GM10248 (cell line): ENCODE measurements at regions of chr12 and their contacts with region 1.

Region 1: DNA sequence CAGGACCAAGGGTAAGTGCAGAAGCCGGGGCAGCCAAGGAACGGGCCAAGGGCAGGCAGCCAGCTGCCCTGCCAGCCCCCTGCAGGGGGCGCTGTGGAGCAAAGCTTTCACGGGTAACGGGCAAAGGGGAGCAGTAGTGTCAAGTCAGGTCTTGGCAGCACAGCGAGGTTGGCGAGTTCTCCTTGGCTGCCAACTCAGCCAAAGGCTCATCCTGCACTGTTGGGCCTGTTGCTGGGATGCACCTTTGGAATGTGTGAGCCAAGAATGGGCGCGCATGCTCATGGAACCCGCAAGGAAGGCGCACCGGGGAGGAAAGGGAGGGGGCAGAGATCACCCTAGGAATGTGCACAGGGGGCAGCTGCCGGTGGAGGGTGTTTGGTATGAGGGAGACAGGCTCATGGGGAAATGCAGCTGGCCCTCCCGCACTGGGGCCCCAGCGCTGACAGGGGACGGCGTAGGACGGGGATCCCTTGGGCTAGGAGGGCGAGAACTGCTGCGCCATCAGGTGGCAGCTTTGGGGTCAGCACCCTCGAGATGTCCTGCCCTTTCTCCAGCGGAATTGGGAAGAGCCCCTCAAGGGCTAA is 138.0 kb downstream of the ASCL4 start:
- DNase-seq: peak; percentile 82
- CTCF ChIP-seq: peak; percentile 91

Region 2: DNA sequence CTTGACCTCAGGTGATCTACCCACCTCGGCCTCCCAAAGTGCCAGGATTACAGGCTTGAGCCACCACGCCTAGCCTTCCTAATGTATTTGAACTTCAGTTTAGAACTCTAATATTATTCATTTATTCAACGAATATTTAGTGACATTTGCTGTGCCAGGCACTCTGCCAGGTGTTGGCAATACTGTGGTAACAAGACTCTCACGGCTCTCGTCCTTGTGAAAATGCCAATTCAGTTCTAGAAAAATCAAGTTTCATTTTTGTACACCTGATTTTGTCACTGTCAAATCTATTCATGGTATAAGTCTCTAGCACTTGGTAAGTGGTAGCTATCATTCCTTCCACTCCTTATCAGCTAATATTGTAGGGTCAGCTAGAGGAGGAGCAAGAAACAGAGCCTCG is 233.2 kb before region 1 on chr12:
- CTCF ChIA-PET with region 1: interaction called, 39 read pairs
- POLR2A ChIA-PET with region 1: no interaction called
- DNase-seq: no peak
- CTCF ChIP-seq: no peak

Region 3: DNA sequence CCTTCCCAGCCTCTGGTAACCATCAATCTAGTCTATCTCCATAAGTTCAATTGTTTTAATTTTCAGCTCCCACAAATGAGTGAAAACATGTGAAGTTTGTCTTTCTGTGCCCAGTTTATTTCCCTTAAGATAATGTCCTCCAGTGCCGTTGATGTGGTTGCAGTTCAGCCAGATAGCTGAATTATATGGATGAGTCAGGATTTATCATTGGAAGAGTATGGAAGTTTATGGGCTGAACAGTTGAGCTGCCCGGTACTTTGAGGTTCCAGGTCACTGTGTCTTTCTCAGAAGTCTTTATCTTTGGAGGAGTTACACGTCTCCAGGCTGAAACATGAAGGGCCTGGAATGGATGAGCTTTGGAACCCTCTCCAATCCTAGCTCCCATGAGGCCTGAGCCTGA is 17.9 kb before region 1 on chr12:
- CTCF ChIA-PET with region 1: interaction called, 18 read pairs
- POLR2A ChIA-PET with region 1: no interaction called
- DNase-seq: no peak
- CTCF ChIP-seq: no peak

Region 4: DNA sequence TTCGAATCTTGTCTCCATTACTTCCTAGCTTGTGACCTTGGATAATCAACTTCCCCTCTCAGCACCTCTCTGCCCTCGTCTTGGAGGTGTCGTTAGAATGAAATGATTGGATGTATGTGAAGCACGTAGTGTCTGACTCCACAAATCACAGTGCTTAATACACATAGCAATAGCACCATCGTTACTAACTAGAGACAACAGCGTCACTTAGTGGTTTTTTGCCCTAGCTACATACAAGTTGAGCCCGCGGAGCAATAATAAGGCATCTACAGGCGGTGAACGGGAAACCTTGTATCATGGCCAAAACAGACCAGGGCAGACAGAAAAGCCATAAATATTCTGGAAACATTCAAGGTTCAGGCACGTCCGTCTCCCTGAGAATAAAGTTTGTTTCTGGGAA is 16.9 kb after region 1 on chr12:
- CTCF ChIA-PET with region 1: interaction called, 54 read pairs
- POLR2A ChIA-PET with region 1: no interaction called
- DNase-seq: no peak
- CTCF ChIP-seq: peak; percentile 20

Region 5: DNA sequence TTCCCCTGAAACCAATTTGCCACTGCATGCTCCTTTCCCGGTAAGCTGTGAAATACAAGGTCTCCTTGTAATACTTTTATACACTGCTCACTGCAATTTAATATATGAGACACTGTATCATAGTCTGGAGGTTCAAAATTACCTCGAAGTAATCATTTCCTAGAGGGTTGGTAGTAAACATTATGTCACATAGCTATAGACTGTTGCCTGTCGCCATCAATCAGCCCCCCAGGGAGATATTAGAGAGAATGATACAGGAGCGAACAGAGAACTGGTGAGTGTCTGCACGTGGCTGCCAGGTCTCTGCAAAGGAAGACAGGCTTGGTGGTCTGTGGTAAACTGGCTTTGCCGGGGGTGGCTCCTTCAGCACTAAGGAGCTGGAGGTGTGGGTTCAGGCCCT is 51.1 kb after region 1 on chr12:
- CTCF ChIA-PET with region 1: no interaction called
- POLR2A ChIA-PET with region 1: no interaction called
- DNase-seq: no peak
- CTCF ChIP-seq: no peak

Region 6: DNA sequence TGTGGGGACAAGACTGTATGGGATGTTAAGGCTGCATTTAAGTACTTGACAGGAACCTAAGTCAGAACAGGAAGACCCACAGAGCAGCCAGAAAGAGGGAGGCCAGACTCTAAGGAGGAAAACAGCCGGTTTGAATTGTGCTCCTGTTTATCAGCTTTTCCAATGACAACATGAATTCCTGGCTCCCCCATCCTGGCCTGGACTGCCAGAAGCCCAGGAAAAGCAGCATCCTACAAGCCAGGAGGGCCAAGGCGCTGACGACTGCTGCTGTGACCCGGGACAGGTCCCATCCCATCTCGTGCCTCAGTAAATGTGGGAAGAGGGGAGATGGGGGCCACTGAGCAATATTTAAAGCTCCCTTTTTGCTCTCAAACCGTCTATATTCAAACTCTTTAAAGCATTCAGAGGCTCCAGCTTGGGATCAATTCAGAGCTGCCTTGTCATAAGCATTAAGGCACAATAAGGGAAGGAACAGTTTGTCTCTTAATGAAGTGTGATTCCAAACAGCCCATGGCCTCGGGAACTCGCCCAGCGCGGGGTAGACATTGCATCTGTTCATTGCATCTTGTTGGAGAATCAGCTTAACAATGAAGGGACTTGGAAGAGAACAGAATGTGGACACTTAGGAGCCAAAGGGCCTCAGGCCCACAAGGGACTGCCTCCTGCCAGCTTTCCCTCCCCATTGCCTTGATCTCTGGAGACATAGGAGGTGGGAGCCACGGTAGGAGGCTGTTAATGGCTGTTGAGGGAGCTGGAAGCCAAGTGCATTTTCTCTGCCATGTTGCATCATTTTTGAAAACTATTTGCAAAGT is 377.0 kb after region 1 on chr12:
- CTCF ChIA-PET with region 1: no interaction called
- POLR2A ChIA-PET with region 1: no interaction called
- DNase-seq: no peak
- CTCF ChIP-seq: no peak